Right ventricle myocardium superior (tissue), 1 donor: ENCODE measurements at regions of chr4 and their contacts with region 1.

Region 1: GRCh38 chr4:113394730-113395530 is 345.5 kb downstream of the ANK2 start:
- DNase-seq: no peak
- ATAC-seq: peak; percentile 97

Region 2: GRCh38 chr4:113434247-113434587 is 39.3 kb after region 1 on chr4:
- intact Hi-C with region 1: loop called (anchors 5 kb)
- DNase-seq: no peak
- ATAC-seq: no peak

Region 3: GRCh38 chr4:113761620-113762185 is 366.8 kb after region 1 on chr4 and contains the start of gene CAMK2D:
- intact Hi-C with region 1: loop called (anchors 5 kb)
- DNase-seq: peak; percentile 89
- ATAC-seq: peak; percentile 81
- total RNA-seq, gene CAMK2D: 194 TPM

Region 4: DNA sequence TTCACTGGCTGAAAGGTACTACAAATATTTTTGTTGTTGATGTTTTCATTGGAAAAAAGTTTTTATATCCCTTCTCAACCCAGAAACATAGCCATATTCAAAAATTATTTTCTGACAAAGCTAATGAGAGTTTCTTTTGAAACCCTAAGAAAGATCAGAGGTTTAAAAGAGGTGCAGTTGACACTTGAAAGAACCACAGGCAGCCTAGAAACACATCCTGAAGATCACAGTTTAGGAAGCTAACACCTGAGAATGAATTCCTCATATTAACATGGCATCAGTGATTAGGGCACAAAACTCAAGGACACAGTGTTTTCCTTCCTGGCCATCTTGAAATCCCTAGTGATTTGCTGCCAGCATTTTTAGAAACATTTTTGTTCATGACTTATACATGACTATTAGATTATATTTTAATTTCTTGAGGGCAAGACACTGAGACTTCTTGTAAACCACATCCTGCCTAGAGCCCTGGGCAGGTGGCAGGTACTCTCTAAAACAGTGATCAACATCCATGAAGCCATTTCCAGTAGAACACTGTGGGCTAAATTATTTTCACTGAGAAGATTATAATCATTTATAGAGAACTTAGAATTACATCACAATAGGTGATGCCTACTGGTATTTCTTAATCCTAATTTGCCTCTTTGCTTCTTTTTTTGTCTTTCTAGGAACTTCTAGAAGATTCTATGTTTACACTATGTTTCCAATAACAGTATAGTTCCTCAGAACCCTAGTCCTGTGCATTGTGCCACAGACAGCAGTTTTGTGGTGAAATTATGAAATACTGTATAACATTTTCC is 504.5 kb after region 1 on chr4:
- intact Hi-C with region 1: loop called (anchors 10 kb)
- DNase-seq: no peak
- ATAC-seq: no peak

Region 5: DNA sequence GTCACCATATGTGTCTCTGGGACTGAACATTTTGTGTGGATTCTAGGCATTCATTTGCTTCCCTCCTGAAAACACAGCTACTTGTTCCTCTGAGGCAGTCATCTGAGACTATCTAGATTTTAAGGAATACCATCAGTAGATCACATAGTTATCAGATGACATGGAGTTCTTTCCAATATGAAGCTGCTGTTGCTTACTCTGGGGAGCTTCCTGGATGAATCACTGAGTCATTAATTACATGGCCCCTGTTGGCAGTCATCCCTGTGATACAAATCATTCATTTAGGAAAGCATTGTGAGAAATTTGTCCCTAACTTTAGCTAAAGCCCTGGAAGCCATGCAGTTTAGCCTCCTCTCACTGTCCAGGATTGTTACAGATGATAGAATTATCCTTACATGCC is 682.7 kb after region 1 on chr4:
- intact Hi-C with region 1: loop called (anchors 10 kb)
- DNase-seq: no peak
- ATAC-seq: no peak